ENCODE measurements at regions of chr11 and their contacts with region 1.

Region 1: DNA sequence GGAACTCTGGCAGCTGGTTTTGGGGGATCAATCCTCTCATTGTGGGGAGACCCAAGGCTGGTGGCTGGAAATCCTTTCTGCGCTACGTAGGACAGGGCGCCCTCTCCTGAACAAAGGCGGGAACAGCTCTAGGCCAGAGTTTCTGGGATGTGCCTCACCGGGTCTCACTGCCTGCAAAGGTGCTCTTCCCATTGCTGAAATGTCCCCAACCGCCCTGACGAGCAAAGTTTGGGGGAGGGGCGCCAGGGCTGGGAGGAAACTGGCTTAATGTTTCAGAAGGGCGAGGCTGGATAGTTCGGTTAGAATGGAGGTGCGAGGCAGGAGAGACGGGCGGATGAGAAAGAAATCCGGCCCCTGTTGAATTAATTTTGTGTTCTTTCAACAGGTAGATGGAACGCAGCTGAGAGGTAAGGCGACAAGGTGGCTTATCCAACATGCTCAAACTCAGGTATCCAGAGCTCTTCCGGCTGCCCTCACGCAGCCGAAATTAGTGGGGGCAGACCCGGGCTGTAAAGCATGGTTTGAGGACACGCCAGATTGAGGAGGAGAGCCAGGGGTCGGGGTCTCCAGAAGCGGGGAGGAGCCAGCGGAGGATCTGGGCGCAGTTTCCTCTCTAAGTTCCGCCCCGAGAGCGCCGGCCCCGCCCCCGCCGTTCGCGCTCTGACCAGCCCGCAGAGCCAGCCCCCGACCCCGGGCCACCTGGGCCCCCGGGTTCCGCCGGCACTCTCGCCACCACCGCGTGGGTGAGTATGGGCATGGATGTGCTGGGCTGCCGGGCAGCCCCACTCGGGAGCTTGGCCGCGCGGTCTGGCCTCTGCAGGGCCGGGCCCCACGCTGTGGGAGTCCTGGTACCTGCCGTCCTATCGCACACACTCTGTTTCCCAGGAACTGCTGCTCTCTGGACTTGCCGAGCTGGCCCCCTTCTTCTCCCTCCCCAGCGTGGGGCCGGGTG is at the start of gene PGAP2:
- DNase-seq: peak; percentile 73
- ATAC-seq: peak; percentile 65
- H3K4me3 ChIP-seq: peak within 1 kb of the TSS; percentile 85
- H3K27ac ChIP-seq: no peak within 1 kb of the TSS
- H3K4me1 ChIP-seq: peaks cover 12% of the 10 kb centered on the region
- H3K27me3 ChIP-seq: no peaks in the 10 kb centered on the region
- CTCF ChIP-seq: peak; percentile 72
- total RNA-seq, gene PGAP2: 21.7 and 25.9 TPM in 2 replicates

Region 2: DNA sequence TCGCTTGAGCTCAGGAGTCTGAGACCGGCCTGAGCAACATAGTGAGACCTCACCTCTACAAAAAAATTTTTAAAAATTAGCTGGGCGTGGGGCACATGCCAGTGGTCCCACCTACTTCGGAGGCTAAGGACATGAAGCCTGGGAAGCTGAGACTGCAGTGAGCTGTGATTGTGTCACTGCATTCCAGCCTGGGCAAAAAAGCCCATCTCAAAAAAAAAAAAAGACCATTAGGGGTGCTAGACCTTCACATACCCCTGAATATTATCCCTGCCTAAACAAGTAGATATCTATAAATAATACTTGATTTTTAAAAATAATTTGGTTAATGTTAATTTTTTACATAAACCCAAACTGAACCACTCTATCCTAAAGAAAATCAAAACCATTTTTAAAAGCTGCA is 35.0 kb before region 1 on chr11:
- CTCF ChIA-PET with region 1: interaction called, 4 read pairs
- POLR2A ChIA-PET with region 1: no interaction called
- intact Hi-C with region 1: loop called (anchors 5 kb)
- DNase-seq: no peak
- ATAC-seq: no peak
- H3K4me3 ChIP-seq: no peak overlapping the region
- H3K27ac ChIP-seq: no peak overlapping the region
- H3K4me1 ChIP-seq: no peaks in the 10 kb centered on the region
- H3K27me3 ChIP-seq: no peaks in the 10 kb centered on the region
- CTCF ChIP-seq: no peak

Region 3: DNA sequence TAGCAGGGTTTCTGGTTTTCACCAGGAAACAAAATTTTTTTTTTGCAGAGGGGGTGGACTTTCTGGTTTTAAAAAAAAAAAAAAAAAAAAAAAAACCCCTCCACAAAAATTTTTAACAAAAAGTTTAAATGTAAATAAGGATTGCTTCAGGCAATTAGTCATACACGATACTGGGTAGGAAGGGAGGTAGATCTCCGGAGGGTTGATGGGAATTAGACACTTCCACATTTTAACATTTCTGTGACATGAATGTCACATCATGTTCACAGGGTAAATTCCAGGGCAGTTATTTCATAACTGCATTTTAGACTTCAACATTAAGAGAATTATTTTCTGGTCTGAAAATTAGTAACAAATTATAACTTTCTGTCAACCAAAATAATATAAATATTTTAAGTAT is 26.8 kb before region 1 on chr11:
- CTCF ChIA-PET with region 1: interaction called, 9 read pairs
- POLR2A ChIA-PET with region 1: no interaction called
- intact Hi-C with region 1: loop called (anchors 2 kb)
- DNase-seq: peak; percentile 50
- ATAC-seq: peak; percentile 81
- H3K4me3 ChIP-seq: no peak overlapping the region
- H3K27ac ChIP-seq: no peak overlapping the region
- H3K4me1 ChIP-seq: peaks cover 13% of the 10 kb centered on the region
- H3K27me3 ChIP-seq: no peaks in the 10 kb centered on the region
- CTCF ChIP-seq: no peak

Region 4: DNA sequence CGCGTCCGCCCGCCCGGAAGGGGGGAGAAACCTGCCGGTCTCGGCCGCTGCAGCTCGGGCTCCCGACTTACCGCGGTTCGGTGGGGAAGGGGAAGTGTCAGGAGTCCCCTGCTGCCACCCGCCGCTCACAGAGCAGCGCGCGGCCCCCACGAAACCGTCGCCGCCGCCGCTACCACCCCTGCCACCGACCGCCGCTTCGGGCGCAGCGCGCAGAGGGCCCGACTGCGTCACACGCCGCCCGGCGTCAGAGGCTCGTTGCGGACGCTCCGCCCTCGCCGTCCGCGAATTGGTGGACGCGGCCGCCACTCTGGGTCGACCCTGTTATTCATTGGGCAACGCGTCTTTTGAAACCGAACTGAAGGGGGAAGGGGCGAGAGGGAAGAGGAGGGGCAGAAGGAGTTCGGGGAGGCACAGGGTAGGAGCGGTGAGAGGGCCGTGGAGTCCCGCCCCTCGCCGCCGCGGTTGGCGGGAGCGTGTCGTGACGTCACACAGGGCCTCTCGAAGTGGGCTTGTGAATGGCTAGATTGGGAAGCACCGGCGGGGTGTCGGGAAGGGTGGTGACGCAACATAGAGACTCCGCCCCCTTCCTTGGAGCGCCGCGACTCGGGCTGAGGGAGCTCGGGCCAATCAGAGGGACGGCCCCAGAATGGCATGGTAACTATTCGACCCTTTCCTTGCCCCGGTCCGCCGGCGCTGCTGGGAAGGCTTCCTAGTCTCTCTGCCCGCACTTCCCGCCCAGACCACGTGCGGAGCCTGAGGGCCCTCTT is 10.7 kb before region 1 on chr11 and contains the start of gene NUP98:
- CTCF ChIA-PET with region 1: interaction called, 7 read pairs
- POLR2A ChIA-PET with region 1: no interaction called
- intact Hi-C with region 1: loop called (anchors 1 kb)
- DNase-seq: peak; percentile 99
- ATAC-seq: peak; percentile 89
- H3K4me3 ChIP-seq: peak within 1 kb of the TSS; percentile 99
- H3K27ac ChIP-seq: peak within 1 kb of the TSS; percentile 74
- H3K4me1 ChIP-seq: peaks cover 21% of the 10 kb centered on the region
- H3K27me3 ChIP-seq: no peaks in the 10 kb centered on the region
- CTCF ChIP-seq: no peak
- total RNA-seq, gene NUP98: 128 and 136 TPM in 2 replicates

Region 5: DNA sequence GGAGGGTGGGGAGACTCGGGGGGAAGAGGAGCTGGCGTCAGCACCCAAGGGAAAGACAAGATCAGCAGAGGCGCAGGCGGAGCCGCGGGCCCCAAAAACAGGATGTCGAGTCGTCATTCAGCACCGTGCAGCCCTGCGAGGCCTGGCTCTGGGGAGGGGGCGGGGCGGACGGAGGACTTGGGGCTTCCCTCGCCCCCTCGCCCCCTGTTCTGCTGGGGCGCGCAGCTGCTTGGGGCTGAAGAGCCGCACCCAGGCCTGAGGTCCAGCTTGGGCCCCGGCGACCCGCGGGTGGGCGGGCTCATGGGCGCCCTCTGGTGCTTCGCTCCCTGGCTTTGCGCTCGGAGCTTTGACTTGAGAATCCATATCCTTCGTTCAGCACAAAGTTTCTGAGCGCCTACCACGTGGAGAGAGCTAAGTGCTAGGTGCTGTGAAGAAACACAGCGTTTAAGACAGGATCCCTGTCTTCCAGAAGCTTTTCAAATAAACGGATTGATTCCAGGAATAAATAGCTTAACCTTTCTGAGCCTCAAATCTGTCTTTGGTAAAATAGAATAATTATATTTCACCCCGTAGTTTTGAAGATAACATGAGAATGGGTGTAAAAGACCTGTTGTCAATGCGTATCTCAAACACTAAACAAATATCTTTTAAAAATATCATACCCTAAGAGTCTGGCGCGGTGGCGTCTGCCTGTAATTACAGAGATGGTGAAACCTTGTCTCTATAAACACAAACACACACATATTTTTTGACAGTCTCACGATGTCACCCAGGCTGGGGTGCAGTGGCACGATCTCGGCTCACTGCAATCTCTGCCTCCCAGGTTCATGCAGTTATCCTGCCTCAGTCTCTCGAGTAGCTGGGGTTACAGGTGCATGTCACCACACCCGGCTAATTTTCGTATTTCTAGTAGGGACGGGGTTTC is 33.5 kb after region 1 on chr11:
- CTCF ChIA-PET with region 1: interaction called, 6 read pairs
- POLR2A ChIA-PET with region 1: no interaction called
- intact Hi-C with region 1: loop called (anchors 2 kb)
- DNase-seq: peak; percentile 83
- ATAC-seq: peak; percentile 69
- H3K4me3 ChIP-seq: peak overlapping the region; percentile 94
- H3K27ac ChIP-seq: peak overlapping the region; percentile 74
- H3K4me1 ChIP-seq: peaks cover 17% of the 10 kb centered on the region
- H3K27me3 ChIP-seq: no peaks in the 10 kb centered on the region
- CTCF ChIP-seq: peak; percentile 73

Measured in PC-3 (cell line).